Esophagus muscularis mucosa (tissue), 4 donors: ENCODE measurements at regions of chr9 and their contacts with region 1.

Region 1: GRCh38 chr9:75265525-75265972 is 177.2 kb downstream of the OSTF1 start:
- DNase-seq: no peak
- H3K4me3 ChIP-seq: no peak overlapping the region
- H3K27ac ChIP-seq: no peak overlapping the region
- H3K4me1 ChIP-seq: no peaks in the 10 kb centered on the region
- H3K27me3 ChIP-seq: no peaks in the 10 kb centered on the region
- CTCF ChIP-seq: peak; percentile 73 to 91 (median 88)
- EP300 ChIP-seq: no peak
- POLR2A ChIP-seq: no peak

Region 2: GRCh38 chr9:75855509-75855908 is 590.0 kb after region 1 on chr9:
- intact Hi-C with region 1: loop called (anchors 5 kb)
- DNase-seq: peak; percentile 12
- H3K4me3 ChIP-seq: no peak overlapping the region
- H3K27ac ChIP-seq: no peak overlapping the region
- H3K4me1 ChIP-seq: no peaks in the 10 kb centered on the region
- H3K27me3 ChIP-seq: no peaks in the 10 kb centered on the region
- CTCF ChIP-seq: peak; percentile 18 to 36 (median 25)
- EP300 ChIP-seq: no peak
- POLR2A ChIP-seq: no peak

Region 3: GRCh38 chr9:75866273-75866871 is 600.8 kb after region 1 on chr9:
- intact Hi-C with region 1: loop called (anchors 5 kb)
- DNase-seq: peak; percentile 89
- H3K4me3 ChIP-seq: no peak overlapping the region
- H3K27ac ChIP-seq: no peak overlapping the region
- H3K4me1 ChIP-seq: no peaks in the 10 kb centered on the region
- H3K27me3 ChIP-seq: no peaks in the 10 kb centered on the region
- CTCF ChIP-seq: peak; percentile 67 to 83 (median 69)
- EP300 ChIP-seq: no peak
- POLR2A ChIP-seq: no peak

Region 4: GRCh38 chr9:76302947-76303940 is 1037.7 kb after region 1 on chr9:
- intact Hi-C with region 1: loop called (anchors 5 kb)
- DNase-seq: no peak
- H3K4me3 ChIP-seq: no peak overlapping the region
- H3K27ac ChIP-seq: no peak overlapping the region
- H3K4me1 ChIP-seq: peaks cover 0 to 9% (median 6%) of the 10 kb centered on the region in 4 donors
- H3K27me3 ChIP-seq: no peaks in the 10 kb centered on the region
- CTCF ChIP-seq: peak; percentile 63 to 78 (median 72)
- EP300 ChIP-seq: no peak
- POLR2A ChIP-seq: no peak